ENCODE measurements at regions of chr22 and their contacts with region 1.

Region 1: GRCh38 chr22:40965936-40966725 is 15.0 kb downstream of the RBX1 start:
- DNase-seq: no peak
- H3K4me3 ChIP-seq: no peak overlapping the region
- H3K27ac ChIP-seq: no peak overlapping the region
- H3K4me1 ChIP-seq: no peaks in the 10 kb centered on the region
- H3K27me3 ChIP-seq: no peaks in the 10 kb centered on the region
- CTCF ChIP-seq: no peak

Region 2: DNA sequence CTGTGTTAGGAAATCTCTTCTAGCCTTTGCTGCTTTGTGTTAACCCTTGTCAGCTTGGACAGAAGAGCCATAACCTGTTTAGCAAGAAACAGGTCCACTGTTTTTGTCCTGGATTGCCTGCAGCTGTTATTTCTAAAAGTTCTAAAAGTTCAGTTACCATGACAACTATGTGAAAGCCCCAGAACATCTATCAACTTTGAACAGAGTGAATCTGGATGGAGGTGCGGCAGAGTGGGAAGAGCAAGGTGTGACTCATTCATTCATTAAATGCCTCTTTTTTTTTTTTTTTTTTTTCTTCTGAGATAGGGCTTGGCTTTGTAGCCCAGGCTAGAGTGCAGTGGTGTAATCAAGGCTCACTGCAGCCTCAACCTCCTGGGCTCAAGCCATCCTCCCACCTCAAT is 35.6 kb after region 1 on chr22:
- intact Hi-C with region 1: no loop called
- DNase-seq: no peak
- H3K4me3 ChIP-seq: no peak overlapping the region
- H3K27ac ChIP-seq: no peak overlapping the region
- H3K4me1 ChIP-seq: no peaks in the 10 kb centered on the region
- H3K27me3 ChIP-seq: peaks cover 0 to 3% of the 10 kb centered on the region in 2 donors
- CTCF ChIP-seq: no peak

Region 3: DNA sequence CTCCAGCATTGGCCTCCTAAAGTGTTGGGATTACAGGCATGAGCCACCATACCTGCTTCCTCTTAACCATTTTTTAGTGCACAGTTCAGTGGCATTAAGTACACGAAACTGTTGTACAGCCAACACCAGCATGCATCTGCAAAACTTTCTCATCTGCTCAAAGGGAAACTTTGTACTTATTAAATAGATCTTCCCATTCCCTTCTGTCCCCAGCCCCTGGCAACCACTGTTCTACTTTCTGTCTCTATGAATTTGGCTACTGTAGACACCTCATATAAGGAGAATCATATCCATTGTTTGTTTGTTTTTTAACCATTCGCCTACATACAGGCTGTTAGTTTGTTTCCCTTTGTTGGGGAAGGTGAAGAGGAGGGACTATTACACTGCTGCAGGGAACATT is 119.7 kb after region 1 on chr22:
- intact Hi-C with region 1: loop called (anchors 5 kb)
- DNase-seq: no peak
- H3K4me3 ChIP-seq: no peak overlapping the region
- H3K27ac ChIP-seq: no peak overlapping the region
- H3K4me1 ChIP-seq: peaks cover 0 to 5% (median 0%) of the 10 kb centered on the region in 4 donors
- H3K27me3 ChIP-seq: no peaks in the 10 kb centered on the region
- CTCF ChIP-seq: no peak